Activated B cell treated with CpG ODN at 0.5 μM for 24 hours (primary cell): ENCODE measurements at regions of chr4 and their contacts with region 1.

Region 1: DNA sequence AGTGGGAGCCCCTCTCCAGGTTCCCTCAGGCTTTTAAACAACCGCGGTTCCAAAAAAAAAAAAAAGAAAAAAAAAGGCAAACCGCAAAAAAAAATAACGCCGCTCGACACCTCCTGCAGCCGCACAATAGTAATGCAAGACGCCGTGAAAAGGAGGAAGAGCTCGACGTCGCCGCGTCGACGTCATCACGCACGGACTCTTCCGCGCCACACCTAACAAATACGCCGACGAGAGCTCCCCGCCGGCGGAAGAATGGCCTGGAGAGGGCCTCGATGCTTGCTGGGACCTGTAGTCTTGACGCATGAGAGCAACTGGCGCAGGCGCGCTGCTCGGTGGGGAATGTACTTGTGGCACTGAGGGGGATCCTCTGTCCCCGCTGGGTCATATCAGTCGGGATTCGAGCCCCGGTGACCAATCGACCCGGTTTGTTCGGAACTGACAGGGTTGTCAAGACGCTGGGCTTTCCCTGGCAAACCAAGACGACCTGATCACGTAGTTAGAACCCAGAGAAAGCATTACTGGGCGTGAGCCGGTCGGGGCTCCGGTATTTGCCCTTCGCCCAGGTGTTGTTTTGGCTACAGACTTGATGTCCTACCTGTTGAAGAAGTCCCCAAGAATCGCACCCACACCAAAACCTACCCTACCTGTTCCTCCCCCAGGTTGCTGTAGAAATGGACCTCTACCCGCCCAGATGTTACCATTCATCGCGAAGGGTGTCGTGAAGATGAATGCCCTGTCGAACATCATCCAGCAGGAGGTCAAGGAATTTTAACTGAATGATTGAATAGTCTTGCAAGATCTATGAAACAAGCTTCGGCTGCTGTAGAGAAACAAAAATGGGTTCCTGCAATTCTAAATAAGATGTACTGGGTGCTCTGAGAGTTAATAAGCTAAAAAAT is at the start of gene CBR4:
- DNase-seq: peak; percentile 86
- ATAC-seq: peak; percentile 96
- H3K4me3 Mint-ChIP-seq: peak within 1 kb of the TSS; percentile 92
- H3K27ac Mint-ChIP-seq: peak within 1 kb of the TSS; percentile 93
- H3K4me1 Mint-ChIP-seq: peaks cover 33% of the 10 kb centered on the region
- H3K27me3 Mint-ChIP-seq: no peaks in the 10 kb centered on the region
- CTCF ChIP-seq: no peak
- total RNA-seq, gene CBR4: 25.7 and 25.8 TPM in 2 replicates

Region 2: GRCh38 chr4:168318266-168318895 is 692.0 kb before region 1 on chr4 and contains the start of gene DDX60:
- CTCF ChIA-PET with region 1: no interaction called
- POLR2A ChIA-PET with region 1: interaction called, 3 read pairs
- intact Hi-C with region 1: loop called (anchors 1 kb)
- DNase-seq: peak; percentile 68
- ATAC-seq: peak; percentile 92
- H3K4me3 Mint-ChIP-seq: peak within 1 kb of the TSS; percentile 95
- H3K27ac Mint-ChIP-seq: peak within 1 kb of the TSS; percentile 96
- H3K4me1 Mint-ChIP-seq: peaks cover 20% of the 10 kb centered on the region
- H3K27me3 Mint-ChIP-seq: no peaks in the 10 kb centered on the region
- CTCF ChIP-seq: no peak
- total RNA-seq, gene DDX60: 17.6 and 17.9 TPM in 2 replicates

Region 3: DNA sequence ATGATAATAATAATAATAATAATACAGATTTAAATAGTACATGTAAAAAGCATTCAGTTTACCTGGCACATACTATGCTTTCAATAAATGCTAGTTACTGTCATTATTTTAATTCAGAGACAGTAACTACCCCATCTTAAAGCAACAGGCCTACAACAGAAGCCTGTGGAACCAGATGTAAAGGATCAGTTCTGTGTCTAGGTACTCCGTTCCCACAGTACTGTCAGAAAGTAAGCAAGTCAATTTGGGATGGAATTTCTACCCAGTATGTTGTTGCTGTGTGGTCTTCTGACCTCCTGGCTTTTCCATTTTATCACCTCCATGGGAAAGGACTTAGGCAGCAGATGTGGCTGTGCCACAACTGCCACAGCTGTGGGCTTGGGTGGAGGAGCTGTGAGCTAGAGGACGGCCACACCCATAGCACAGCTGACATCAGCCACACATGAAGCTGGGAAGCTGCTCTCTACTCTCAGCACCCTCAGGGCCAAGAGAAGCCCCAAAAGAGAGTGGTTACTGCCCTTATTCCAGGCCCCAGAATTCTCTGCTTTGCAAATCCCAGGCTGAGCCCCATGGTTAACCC is 103.2 kb before region 1 on chr4:
- CTCF ChIA-PET with region 1: no interaction called
- POLR2A ChIA-PET with region 1: no interaction called
- intact Hi-C with region 1: no loop called
- DNase-seq: no peak
- ATAC-seq: no peak
- H3K4me3 Mint-ChIP-seq: no peak overlapping the region
- H3K27ac Mint-ChIP-seq: no peak overlapping the region
- H3K4me1 Mint-ChIP-seq: no peaks in the 10 kb centered on the region
- H3K27me3 Mint-ChIP-seq: no peaks in the 10 kb centered on the region
- CTCF ChIP-seq: no peak

Region 4: DNA sequence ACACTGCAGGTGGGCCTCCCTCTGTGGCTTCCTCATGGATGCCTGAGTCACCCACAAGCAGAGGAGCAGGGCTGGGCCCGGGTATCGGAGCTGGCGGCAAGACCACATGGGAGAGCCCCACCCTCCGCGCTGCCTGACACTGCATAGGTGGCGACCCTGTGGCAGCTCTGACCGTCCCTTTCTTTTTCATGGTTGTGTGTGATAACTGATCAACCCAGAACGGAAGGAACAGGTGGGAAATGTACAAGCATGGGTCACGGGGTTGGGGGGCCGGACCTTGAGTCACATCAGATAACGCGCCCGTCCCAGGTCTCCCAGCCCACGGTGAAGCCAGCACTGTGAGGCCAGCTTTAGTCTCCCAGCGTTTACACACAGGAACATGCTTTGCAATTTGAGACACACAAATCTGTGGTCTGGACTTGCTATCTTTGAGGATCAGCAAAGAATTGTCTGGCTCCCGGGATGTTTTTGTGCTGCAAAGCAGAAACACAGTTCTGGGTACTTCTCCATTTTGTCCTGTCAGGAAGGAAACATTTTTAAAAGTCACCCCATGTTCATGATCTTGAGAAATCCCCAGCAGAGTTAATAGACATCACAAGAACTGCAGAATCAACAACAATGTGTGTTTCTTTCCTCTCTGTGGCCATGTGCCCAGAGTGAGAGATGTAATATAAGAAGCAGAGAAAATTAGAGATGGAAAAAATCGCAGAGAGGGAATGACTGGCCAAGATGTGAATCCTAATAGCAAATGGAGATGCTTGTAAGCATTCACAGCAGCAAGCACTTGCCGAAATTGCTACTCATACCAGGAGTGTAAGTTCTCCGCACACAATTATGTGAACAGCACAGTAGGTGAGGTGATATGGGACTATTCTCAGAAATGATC is 69.8 kb after region 1 on chr4:
- CTCF ChIA-PET with region 1: no interaction called
- POLR2A ChIA-PET with region 1: interaction called, 3 read pairs
- intact Hi-C with region 1: loop called (anchors 5 kb)
- DNase-seq: peak; percentile 18
- ATAC-seq: peak; percentile 68
- H3K4me3 Mint-ChIP-seq: peak overlapping the region; percentile 56
- H3K27ac Mint-ChIP-seq: peak overlapping the region; percentile 5
- H3K4me1 Mint-ChIP-seq: peaks cover 25% of the 10 kb centered on the region
- H3K27me3 Mint-ChIP-seq: no peaks in the 10 kb centered on the region
- CTCF ChIP-seq: no peak

Region 5: GRCh38 chr4:169270810-169271691 is 260.7 kb after region 1 on chr4 and contains the start of gene SH3RF1:
- CTCF ChIA-PET with region 1: no interaction called
- POLR2A ChIA-PET with region 1: interaction called, 5 read pairs
- intact Hi-C with region 1: loop called (anchors 1 kb)
- DNase-seq: peak; percentile 56
- ATAC-seq: peak; percentile 60
- H3K4me3 Mint-ChIP-seq: peak within 1 kb of the TSS; percentile 89
- H3K27ac Mint-ChIP-seq: peak within 1 kb of the TSS; percentile 75
- H3K4me1 Mint-ChIP-seq: peaks cover 25% of the 10 kb centered on the region
- H3K27me3 Mint-ChIP-seq: peaks cover 4% of the 10 kb centered on the region
- CTCF ChIP-seq: no peak
- total RNA-seq, gene SH3RF1: 6.9 and 7.1 TPM in 2 replicates

Region 6: DNA sequence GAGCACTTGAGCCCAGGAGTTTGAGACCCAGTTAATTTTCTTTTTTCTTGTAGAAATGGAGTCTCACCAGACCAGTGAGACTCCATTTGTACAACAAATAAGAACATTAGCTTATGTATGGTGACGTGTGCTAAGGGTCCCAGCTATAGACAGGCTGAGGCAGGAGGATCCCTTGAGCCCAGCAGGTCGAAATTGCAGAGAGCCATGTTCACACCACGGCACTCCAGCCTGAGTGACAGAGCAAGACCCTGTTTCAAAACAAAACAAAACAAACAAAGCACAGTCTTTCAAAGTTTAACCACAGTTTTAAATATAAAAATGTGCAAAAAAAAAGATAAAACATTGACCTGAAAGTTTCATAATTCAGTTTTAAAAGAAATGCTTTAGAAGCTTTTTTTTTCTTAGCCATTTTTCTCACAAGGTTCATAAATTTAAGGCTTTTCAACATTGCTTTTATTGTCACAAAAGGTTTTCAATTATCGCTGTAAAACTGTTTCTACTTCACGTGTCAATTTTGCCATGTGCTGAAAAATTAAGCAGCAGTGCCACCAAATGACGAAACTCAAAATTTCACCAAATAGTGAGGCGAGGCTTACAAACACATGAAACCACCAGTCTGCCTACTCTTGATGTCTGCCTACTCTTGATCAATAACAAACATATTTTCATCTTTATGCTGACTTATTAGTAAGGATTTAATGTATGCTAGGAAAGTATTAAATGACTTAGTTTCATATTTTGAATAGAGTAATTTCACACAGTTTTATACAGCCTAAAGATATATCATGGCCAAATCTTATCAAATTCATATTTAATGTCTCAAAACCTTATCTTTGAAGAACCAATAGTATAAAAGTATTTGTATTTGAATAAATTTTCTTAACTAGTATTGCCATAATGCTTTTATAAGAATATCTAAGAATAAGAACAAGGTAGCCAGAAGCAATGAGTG is 475.7 kb after region 1 on chr4:
- CTCF ChIA-PET with region 1: interaction called, 3 read pairs
- POLR2A ChIA-PET with region 1: no interaction called
- intact Hi-C with region 1: loop called (anchors 1 kb)
- DNase-seq: no peak
- ATAC-seq: no peak
- H3K4me3 Mint-ChIP-seq: no peak overlapping the region
- H3K27ac Mint-ChIP-seq: no peak overlapping the region
- H3K4me1 Mint-ChIP-seq: no peaks in the 10 kb centered on the region
- H3K27me3 Mint-ChIP-seq: no peaks in the 10 kb centered on the region
- CTCF ChIP-seq: no peak

Region 7: GRCh38 chr4:169659716-169660670 is 649.6 kb after region 1 on chr4:
- CTCF ChIA-PET with region 1: no interaction called
- POLR2A ChIA-PET with region 1: interaction called, 5 read pairs
- intact Hi-C with region 1: loop called (anchors 1 kb)
- DNase-seq: peak; percentile 28
- ATAC-seq: peak; percentile 92
- H3K4me3 Mint-ChIP-seq: peak overlapping the region; percentile 83
- H3K27ac Mint-ChIP-seq: peak overlapping the region; percentile 95
- H3K4me1 Mint-ChIP-seq: peaks cover 22% of the 10 kb centered on the region
- H3K27me3 Mint-ChIP-seq: no peaks in the 10 kb centered on the region
- CTCF ChIP-seq: no peak